ENCODE measurements at regions of chr6 and their contacts with region 1.

Region 1: GRCh38 chr6:2791124-2791974 is 26.2 kb downstream of the WRNIP1 start:
- DNase-seq: peak; percentile 46 to 75
- ATAC-seq: peak; percentile 71 to 81 (median 76)
- H3K4me3 ChIP-seq: no peak overlapping the region
- H3K4me3 Mint-ChIP-seq: peak overlapping the region; percentile 85
- H3K27ac ChIP-seq: peak overlapping the region; percentile 17
- H3K27ac Mint-ChIP-seq: peak overlapping the region; percentile 93 to 94
- H3K4me1 ChIP-seq: peaks cover 51% of the 10 kb centered on the region
- H3K4me1 Mint-ChIP-seq: peaks cover 47 to 49% of the 10 kb centered on the region in 2 donors
- H3K27me3 ChIP-seq: no peaks in the 10 kb centered on the region
- H3K27me3 Mint-ChIP-seq: no peaks in the 10 kb centered on the region
- CTCF ChIP-seq: peak; percentile 79

Region 2: DNA sequence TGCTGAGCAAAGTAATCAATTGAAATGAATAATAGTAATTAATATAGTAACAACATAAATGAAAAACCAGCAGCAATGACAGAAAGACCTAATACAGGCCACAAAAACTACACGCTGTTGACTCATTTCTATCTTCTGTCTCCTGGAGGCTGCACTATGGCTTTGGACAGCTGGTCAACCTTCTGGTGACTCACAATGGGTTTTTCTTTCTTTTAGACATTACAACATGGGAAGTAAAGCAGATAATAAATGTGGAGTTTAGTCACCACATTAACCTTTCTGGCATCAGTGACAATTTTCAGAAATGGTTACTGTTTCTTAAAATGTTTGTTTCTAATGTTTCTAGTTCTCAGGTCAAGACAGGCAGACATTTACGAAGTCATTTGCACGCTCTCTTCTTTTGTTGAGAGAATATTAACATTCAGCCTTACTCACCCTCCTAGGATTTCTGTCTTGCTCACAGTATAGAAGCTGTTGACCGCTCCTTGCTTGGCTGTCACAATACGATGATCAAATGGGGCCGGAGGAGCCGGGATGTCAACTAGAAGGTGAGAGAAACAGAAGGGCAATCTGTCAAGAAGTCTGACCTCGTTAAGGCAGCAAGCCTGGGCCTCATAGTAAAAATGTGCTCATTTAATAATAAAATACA is 102.8 kb before region 1 on chr6:
- intact Hi-C with region 1: no loop called
- DNase-seq: no peak
- ATAC-seq: no peak
- H3K4me3 ChIP-seq: no peak overlapping the region
- H3K4me3 Mint-ChIP-seq: no peak overlapping the region
- H3K27ac ChIP-seq: no peak overlapping the region
- H3K27ac Mint-ChIP-seq: no peak overlapping the region
- H3K4me1 ChIP-seq: no peaks in the 10 kb centered on the region
- H3K4me1 Mint-ChIP-seq: no peaks in the 10 kb centered on the region
- H3K27me3 ChIP-seq: no peaks in the 10 kb centered on the region
- H3K27me3 Mint-ChIP-seq: peaks cover 7 to 8% of the 10 kb centered on the region in 2 donors
- CTCF ChIP-seq: no peak

Region 3: DNA sequence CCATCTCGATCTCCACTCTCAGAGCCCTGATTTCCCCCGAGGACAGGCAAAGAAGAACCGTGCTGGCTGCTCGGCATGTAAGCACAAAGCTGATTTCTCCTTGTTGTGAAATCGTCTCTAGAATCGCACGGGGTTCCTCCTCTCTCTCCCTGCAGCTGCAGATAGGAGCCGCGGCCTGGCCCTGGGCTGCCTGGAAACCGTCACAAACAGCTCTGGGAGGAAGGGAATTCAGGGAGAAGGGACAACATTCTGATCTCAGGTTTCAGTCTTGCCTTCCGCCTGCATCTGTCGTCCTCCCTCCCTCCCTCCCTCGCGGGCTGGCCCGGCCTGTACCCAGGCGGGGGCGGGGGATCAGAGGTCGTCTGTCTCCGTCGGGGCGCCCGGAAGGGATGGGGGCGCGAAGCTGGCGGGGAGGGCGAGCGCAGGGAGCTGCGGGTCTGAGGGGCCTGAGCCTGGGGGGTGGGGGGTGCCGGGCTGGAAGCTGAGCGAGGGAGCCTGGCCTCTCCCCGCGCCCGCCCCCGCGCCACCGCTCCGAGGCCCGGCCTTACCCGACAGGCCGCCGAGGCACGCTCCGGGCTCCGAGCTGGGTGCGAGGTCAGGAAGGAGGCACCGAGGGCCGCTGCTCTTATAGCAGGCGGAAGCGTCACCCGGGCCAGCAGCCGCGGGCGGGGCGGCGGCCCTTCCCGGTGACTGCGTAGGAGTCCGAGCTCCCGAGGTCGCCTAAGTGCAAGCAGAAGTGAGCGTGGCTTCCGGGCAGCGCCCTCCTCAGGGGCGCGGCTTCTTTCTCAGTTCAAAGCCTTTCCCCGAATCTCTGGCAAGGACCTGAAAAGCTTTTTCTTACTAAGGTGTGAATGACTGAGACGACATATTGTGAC is 50.2 kb after region 1 on chr6 and contains the start of gene SERPINB1:
- intact Hi-C with region 1: loop called (anchors 1 kb)
- DNase-seq: peak; percentile 72 to 83
- ATAC-seq: peak; percentile 81 to 90 (median 84)
- H3K4me3 ChIP-seq: peak within 1 kb of the TSS; percentile 64
- H3K4me3 Mint-ChIP-seq: peak within 1 kb of the TSS; percentile 94
- H3K27ac ChIP-seq: peak within 1 kb of the TSS; percentile 78
- H3K27ac Mint-ChIP-seq: peak within 1 kb of the TSS; percentile 90 to 94
- H3K4me1 ChIP-seq: peaks cover 38% of the 10 kb centered on the region
- H3K4me1 Mint-ChIP-seq: peaks cover 57 to 58% of the 10 kb centered on the region in 2 donors
- H3K27me3 ChIP-seq: no peaks in the 10 kb centered on the region
- H3K27me3 Mint-ChIP-seq: no peaks in the 10 kb centered on the region
- CTCF ChIP-seq: no peak
- total RNA-seq, gene SERPINB1: 74.8 to 80.2 (median 78.1) TPM

Region 4: GRCh38 chr6:2857580-2858337 is 66.4 kb after region 1 on chr6:
- intact Hi-C with region 1: loop called (anchors 5 kb)
- DNase-seq: peak; percentile 60 to 85
- ATAC-seq: peak; percentile 61 to 65 (median 64)
- H3K4me3 ChIP-seq: no peak overlapping the region
- H3K4me3 Mint-ChIP-seq: peak overlapping the region; percentile 87
- H3K27ac ChIP-seq: peak overlapping the region; percentile 91
- H3K27ac Mint-ChIP-seq: peak overlapping the region; percentile 94 to 97
- H3K4me1 ChIP-seq: peaks cover 81% of the 10 kb centered on the region
- H3K4me1 Mint-ChIP-seq: peaks cover 60 to 73% of the 10 kb centered on the region in 2 donors
- H3K27me3 ChIP-seq: no peaks in the 10 kb centered on the region
- H3K27me3 Mint-ChIP-seq: no peaks in the 10 kb centered on the region
- CTCF ChIP-seq: no peak

Region 5: DNA sequence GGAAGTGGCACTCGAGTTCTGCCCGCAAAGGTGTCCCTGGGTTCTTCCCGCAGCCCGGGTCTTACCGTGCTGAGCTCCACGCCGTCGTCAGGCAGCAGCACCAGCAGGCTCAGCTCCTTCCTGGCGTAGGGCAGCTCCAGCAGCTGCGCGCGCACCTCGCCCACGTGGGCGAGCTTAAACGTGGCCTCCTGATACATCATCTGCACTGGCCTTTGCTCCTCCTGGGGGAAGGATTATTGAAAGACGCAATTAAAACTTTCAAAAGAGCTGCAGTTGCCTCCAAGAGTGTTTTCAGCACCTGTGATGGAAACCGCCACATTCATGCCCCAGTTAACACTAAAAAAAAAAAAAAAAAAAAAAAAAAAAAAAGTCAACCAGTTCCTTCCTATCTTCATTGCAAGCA is 100.4 kb after region 1 on chr6:
- intact Hi-C with region 1: no loop called
- DNase-seq: peak in 1 of 2 donors; percentile 89
- ATAC-seq: peak in 2 of 3 donors; percentile 39 to 47
- H3K4me3 ChIP-seq: no peak overlapping the region
- H3K4me3 Mint-ChIP-seq: no peak overlapping the region
- H3K27ac ChIP-seq: peak overlapping the region; percentile 63
- H3K27ac Mint-ChIP-seq: no peak overlapping the region
- H3K4me1 ChIP-seq: peaks cover 10% of the 10 kb centered on the region
- H3K4me1 Mint-ChIP-seq: peaks cover 11 to 15% of the 10 kb centered on the region in 2 donors
- H3K27me3 ChIP-seq: no peaks in the 10 kb centered on the region
- H3K27me3 Mint-ChIP-seq: no peaks in the 10 kb centered on the region
- CTCF ChIP-seq: no peak

Region 6: DNA sequence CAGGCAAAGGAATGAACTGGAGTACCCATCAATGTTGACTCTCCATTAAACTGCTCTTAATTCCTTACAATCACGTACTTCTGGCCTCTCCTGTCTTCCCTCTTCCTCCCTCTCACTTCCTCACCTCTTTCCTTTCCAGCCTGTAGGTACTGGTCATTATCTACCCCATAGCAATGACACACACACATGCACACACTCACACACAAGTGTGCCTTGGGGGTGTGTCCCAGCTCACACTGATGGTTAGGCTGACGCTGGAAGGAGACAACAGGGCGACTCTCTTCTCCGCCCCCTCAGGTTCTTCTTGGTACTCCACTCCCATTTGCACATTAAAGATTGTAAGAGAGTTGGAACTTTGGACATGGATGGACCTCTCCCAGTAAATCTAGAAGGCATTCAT is 125.7 kb after region 1 on chr6:
- intact Hi-C with region 1: loop called (anchors 5 kb)
- DNase-seq: no peak
- ATAC-seq: no peak
- H3K4me3 ChIP-seq: no peak overlapping the region
- H3K4me3 Mint-ChIP-seq: peak overlapping the region; percentile 50
- H3K27ac ChIP-seq: peak overlapping the region; percentile 38
- H3K27ac Mint-ChIP-seq: peak overlapping the region; percentile 84 to 89
- H3K4me1 ChIP-seq: peaks cover 54% of the 10 kb centered on the region
- H3K4me1 Mint-ChIP-seq: peaks cover 47 to 56% of the 10 kb centered on the region in 2 donors
- H3K27me3 ChIP-seq: no peaks in the 10 kb centered on the region
- H3K27me3 Mint-ChIP-seq: peaks cover 0 to 3% of the 10 kb centered on the region in 2 donors
- CTCF ChIP-seq: no peak

Region 7: DNA sequence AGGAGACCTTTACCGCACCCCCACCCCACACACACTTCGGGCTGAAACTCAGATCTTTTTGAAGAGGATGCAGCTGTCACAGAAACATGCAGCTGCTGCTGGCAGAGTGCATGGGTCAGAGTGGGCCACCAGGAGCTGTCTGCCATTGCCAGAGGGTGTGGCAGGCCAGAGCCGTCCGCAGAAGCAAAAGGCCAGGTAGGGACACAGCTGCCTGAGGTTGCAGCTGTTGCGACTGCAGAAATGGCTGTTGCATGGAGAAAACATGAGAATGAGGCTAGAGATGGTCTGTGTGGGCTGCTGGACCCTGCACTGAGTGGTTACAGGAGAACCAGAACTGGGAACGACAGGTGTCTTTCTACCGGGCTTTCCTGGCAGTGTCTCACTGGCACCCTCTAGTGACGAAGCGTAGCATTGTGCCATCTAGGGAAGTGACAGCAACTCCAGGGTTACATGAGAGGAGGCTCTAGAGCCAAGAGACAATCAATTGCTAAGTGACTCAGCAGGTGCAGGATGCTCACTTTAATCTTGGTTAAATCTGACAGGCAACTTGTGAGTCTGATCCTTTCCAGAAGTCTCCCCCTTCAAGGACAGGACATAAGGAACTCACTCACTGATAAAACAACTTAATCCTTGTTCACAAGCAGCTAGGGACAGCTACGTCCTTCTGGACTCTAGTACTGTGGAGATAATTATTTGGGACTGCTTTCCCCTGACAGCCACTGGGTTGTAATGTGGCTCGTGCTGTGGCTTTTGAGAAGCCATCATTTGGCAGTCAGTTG is 140.8 kb after region 1 on chr6:
- intact Hi-C with region 1: loop called (anchors 1 kb)
- DNase-seq: peak; percentile 77 to 93
- ATAC-seq: peak; percentile 86 to 95 (median 87)
- H3K4me3 ChIP-seq: no peak overlapping the region
- H3K4me3 Mint-ChIP-seq: peak overlapping the region; percentile 9
- H3K27ac ChIP-seq: no peak overlapping the region
- H3K27ac Mint-ChIP-seq: peak overlapping the region in 1 of 2 donors; percentile 18
- H3K4me1 ChIP-seq: peaks cover 10% of the 10 kb centered on the region
- H3K4me1 Mint-ChIP-seq: peaks cover 21 to 22% of the 10 kb centered on the region in 2 donors
- H3K27me3 ChIP-seq: no peaks in the 10 kb centered on the region
- H3K27me3 Mint-ChIP-seq: no peaks in the 10 kb centered on the region
- CTCF ChIP-seq: peak; percentile 96

Region 8: GRCh38 chr6:3052481-3053230 is 261.3 kb after region 1 on chr6:
- intact Hi-C with region 1: loop called (anchors 10 kb)
- DNase-seq: no peak
- ATAC-seq: no peak
- H3K4me3 ChIP-seq: no peak overlapping the region
- H3K4me3 Mint-ChIP-seq: peak overlapping the region; percentile 68
- H3K27ac ChIP-seq: no peak overlapping the region
- H3K27ac Mint-ChIP-seq: peak overlapping the region in 1 of 2 donors; percentile 71
- H3K4me1 ChIP-seq: peaks cover 21% of the 10 kb centered on the region
- H3K4me1 Mint-ChIP-seq: peaks cover 10 to 17% of the 10 kb centered on the region in 2 donors
- H3K27me3 ChIP-seq: no peaks in the 10 kb centered on the region
- H3K27me3 Mint-ChIP-seq: peaks cover 0 to 11% of the 10 kb centered on the region in 2 donors
- CTCF ChIP-seq: no peak